ENCODE measurements at regions of chr1 and their contacts with region 1.

Region 1: DNA sequence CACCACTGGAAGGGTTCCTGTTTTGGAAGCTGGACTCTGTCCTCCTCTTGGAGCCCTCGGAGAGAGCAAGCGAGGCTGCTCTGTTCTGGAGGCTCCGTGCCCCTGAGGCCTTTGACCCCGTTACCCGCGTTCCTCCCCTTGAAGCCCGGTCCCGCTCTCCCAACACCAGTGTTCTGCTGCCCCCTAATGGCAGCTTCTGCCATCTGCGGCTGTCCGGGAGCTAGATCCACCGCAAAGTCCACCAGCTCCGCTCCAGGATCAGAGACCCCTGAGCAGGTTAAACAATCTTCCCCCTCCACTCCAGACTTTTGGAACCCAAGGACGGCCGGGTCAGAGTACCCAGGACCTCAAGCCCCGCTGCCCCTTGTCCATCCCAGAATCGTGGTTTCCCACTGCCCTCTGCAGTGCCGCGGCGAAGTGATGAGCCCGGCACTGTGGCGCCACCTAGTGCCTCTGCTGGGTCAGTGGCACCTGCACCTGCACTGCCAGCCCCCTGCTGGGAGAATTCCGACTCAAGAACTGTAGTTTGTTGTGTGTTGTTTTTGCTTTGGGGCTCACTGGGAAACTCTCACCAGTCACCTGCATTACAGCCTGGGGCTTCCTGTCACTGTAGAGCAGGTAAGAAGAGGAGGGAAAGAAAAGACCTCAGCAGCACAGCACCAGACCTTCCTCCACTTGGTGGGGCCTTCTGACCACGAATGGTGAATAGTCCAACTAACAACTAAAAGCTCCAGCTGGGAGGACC is 63.5 kb upstream of the NFASC start:
- DNase-seq: peak; percentile 92
- ATAC-seq: peak; percentile 84
- H3K4me3 Mint-ChIP-seq: peak overlapping the region; percentile 77
- H3K27ac Mint-ChIP-seq: no peak overlapping the region
- H3K4me1 Mint-ChIP-seq: peaks cover 13% of the 10 kb centered on the region
- H3K27me3 Mint-ChIP-seq: peaks cover 15% of the 10 kb centered on the region
- CTCF ChIP-seq: peak; percentile 99

Region 2: GRCh38 chr1:204572931-204573891 is 233.9 kb before region 1 on chr1:
- CTCF ChIA-PET with region 1: interaction called, 216 read pairs
- POLR2A ChIA-PET with region 1: interaction called, 11 read pairs
- DNase-seq: no peak
- ATAC-seq: no peak
- H3K4me3 Mint-ChIP-seq: no peak overlapping the region
- H3K27ac Mint-ChIP-seq: no peak overlapping the region
- H3K4me1 Mint-ChIP-seq: peaks cover 82% of the 10 kb centered on the region
- H3K27me3 Mint-ChIP-seq: peaks cover 22% of the 10 kb centered on the region
- CTCF ChIP-seq: no peak

Region 3: GRCh38 chr1:204615881-204616280 is 191.2 kb before region 1 on chr1:
- CTCF ChIA-PET with region 1: interaction called, 14 read pairs
- POLR2A ChIA-PET with region 1: no interaction called
- DNase-seq: no peak
- ATAC-seq: no peak
- H3K4me3 Mint-ChIP-seq: no peak overlapping the region
- H3K27ac Mint-ChIP-seq: no peak overlapping the region
- H3K4me1 Mint-ChIP-seq: peaks cover 14% of the 10 kb centered on the region
- H3K27me3 Mint-ChIP-seq: no peaks in the 10 kb centered on the region; the same call in 1 of the 2 replicates
- CTCF ChIP-seq: no peak

Region 4: DNA sequence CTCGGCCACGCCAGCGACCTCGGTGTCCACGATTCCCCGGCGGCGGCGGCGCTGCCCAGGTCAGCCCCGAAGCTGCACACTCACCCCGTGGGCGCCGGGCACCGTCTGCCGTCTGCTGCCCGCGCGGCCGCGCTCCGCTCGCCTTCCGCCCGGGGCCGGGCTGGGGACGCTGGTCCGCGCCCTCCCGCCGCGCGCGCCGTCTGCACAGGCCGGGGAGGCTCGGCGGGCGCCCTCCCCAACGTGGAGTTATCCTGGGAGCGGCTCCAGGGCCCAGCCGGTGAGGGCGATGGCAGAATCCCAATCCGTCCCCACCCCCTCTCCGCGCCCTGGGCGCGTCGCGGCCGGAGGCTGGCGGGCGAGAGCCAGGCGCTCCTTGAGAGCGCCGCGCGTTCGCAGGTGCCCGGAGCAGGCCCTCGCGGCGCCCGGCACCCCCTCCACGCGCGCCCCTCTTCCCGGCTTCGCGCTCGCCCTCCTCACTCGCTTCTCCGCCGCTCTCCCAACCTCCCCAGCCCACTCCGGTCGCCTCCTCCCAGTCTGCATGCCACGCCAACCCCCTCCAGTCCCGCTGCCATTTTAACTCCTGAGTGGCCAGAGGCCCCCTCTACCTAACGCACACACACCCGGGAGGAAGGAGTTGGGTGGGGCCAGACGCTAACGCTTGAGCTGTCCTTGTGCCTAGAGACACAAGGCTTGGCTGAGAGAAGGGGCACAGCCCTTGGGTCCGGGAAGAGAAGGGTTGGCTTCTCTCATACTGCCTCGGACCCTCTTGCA is 121.7 kb before region 1 on chr1 and contains the start of gene LRRN2:
- CTCF ChIA-PET with region 1: interaction called, 40 read pairs
- POLR2A ChIA-PET with region 1: no interaction called
- DNase-seq: peak; percentile 42
- ATAC-seq: peak; percentile 33
- H3K4me3 Mint-ChIP-seq: peak within 1 kb of the TSS; percentile 85
- H3K27ac Mint-ChIP-seq: no peak within 1 kb of the TSS; the same call in 1 of the 2 replicates
- H3K4me1 Mint-ChIP-seq: peaks cover 26% of the 10 kb centered on the region
- H3K27me3 Mint-ChIP-seq: peaks cover 65% of the 10 kb centered on the region
- CTCF ChIP-seq: no peak
- total RNA-seq, gene LRRN2: 3.2 to 5.3 TPM (median 3.4 TPM) in 3 replicates

Region 5: DNA sequence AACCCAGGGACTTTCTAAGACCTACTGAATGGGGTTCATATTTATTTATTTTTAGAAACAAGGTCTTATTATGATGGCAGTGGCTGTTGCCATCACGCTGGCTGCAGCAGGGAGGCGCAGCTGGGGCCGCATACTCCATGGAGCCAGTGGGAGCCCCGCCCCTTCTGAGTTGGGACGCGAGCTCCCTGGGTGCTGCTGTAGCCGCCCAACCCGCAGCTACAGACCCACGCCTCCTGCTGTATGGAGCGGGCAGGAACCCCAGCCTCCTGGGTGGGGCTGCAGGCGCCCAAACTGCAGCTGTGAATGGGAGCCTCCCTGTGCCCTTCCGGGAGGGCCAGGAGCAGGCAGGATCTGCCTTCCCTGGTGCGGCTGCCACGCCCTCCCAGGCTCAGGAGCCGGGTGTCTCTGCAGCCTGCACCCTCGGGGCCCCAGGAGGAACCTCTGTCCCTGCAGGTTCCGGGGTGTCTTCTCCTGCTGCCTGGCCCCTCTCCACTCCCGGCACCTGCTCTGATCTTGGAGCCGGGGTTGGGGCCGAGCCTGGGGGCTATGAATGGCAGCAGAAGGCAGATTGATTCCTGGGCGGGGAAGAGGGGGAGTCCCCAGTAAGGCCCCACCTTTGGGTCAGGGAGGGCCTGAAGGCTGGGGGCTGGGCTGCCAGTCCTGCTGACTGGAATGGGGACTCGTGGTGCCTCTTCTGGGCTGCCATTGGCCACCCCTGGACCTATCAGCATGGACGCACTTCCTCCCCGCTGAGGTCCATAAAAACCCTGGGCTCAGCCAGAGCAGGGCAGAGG is 55.0 kb before region 1 on chr1:
- CTCF ChIA-PET with region 1: interaction called, 34 read pairs
- POLR2A ChIA-PET with region 1: no interaction called
- DNase-seq: peak; percentile 73
- ATAC-seq: peak; percentile 85
- H3K4me3 Mint-ChIP-seq: 0 out of 2 replicates have a peak overlapping the region, but pooled peaks have one; percentile 25
- H3K27ac Mint-ChIP-seq: no peak overlapping the region
- H3K4me1 Mint-ChIP-seq: peaks cover 24% of the 10 kb centered on the region
- H3K27me3 Mint-ChIP-seq: peaks cover 12% of the 10 kb centered on the region
- CTCF ChIP-seq: no peak

Region 6: DNA sequence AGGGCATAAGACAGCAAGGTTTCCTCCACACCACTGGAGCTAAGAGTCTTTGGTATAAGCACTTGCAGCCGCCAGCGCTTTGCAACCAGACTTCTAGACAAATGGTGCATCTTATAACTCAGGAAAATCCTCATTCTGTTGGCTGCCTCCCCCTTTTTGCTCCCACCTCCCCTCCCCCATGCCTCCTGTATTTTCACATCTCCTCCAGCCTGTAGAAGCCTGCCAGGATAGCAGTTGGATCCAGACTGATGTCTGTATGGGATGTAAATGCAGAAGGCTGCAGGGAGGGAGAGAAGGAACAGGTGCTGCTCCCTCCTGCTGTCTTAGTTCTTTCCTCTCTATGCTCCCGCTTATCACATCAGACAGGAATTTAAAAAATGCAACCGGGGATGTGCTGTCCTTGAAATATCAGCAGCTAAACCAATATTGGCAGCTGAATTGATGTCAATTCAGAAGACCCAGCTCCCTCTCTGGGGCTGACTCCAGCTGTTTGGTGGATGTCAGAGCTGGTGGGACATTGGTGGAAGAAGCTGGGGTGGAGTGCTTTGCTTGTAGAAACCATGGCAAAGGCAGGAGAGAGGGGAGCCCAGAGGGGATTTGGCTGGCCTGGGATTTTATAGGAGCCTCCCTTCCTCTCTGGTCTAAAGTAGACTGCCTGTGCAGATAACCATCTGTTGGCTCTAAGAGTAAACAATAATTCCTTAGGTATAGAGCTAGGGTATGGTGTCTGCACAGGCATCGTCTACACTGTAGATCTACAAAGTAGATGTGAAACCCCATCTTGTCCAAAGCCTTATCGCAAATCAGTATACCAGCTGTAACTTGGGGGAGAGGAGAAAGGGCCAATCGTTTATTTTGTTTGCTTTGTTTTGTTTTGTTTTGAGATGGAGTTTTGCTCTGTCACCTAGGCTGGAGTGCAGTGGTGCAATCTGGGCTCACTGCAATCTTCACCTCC is 117.2 kb after region 1 on chr1:
- CTCF ChIA-PET with region 1: interaction called, 30 read pairs
- POLR2A ChIA-PET with region 1: no interaction called
- DNase-seq: peak; percentile 57
- ATAC-seq: peak; percentile 84
- H3K4me3 Mint-ChIP-seq: peak overlapping the region; percentile 25
- H3K27ac Mint-ChIP-seq: peak overlapping the region; percentile 96
- H3K4me1 Mint-ChIP-seq: peaks cover 82% of the 10 kb centered on the region
- H3K27me3 Mint-ChIP-seq: peaks cover 2% of the 10 kb centered on the region; the same call in 1 of the 2 replicates
- CTCF ChIP-seq: no peak

Region 7: GRCh38 chr1:205048382-205048781 is 241.3 kb after region 1 on chr1:
- CTCF ChIA-PET with region 1: no interaction called
- POLR2A ChIA-PET with region 1: no interaction called
- DNase-seq: no peak
- ATAC-seq: no peak
- H3K4me3 Mint-ChIP-seq: no peak overlapping the region
- H3K27ac Mint-ChIP-seq: no peak overlapping the region
- H3K4me1 Mint-ChIP-seq: peaks cover 33% of the 10 kb centered on the region
- H3K27me3 Mint-ChIP-seq: peaks cover 16% of the 10 kb centered on the region
- CTCF ChIP-seq: no peak

Measured in WTC11 (cell line).